MCF 10A (cell line): ENCODE measurements at regions of chr13 and their contacts with region 1.

Region 1: GRCh38 chr13:99516153-99516929 is 15.1 kb downstream of the TM9SF2 start:
- DNase-seq: no peak
- H3K4me3 Mint-ChIP-seq: no peak overlapping the region
- H3K27ac Mint-ChIP-seq: peak overlapping the region; percentile 40
- H3K4me1 Mint-ChIP-seq: peaks cover 20% of the 10 kb centered on the region
- H3K27me3 Mint-ChIP-seq: no peaks in the 10 kb centered on the region
- CTCF ChIP-seq: no peak

Region 2: GRCh38 chr13:99501184-99501847 is 15.0 kb before region 1 on chr13 and contains the start of gene TM9SF2:
- CTCF ChIA-PET with region 1: interaction called, 33 read pairs
- POLR2A ChIA-PET with region 1: interaction called, 42 read pairs
- intact Hi-C with region 1: no loop called
- DNase-seq: peak; percentile 96
- H3K4me3 Mint-ChIP-seq: peak within 1 kb of the TSS; percentile 90
- H3K27ac Mint-ChIP-seq: peak within 1 kb of the TSS; percentile 83
- H3K4me1 Mint-ChIP-seq: peaks cover 27% of the 10 kb centered on the region
- H3K27me3 Mint-ChIP-seq: no peaks in the 10 kb centered on the region
- CTCF ChIP-seq: no peak
- total RNA-seq, gene TM9SF2: 71.1 and 77.0 TPM in 2 replicates